Mammary epithelial cell (primary cell): ENCODE measurements at regions of chrX and their contacts with region 1.

Region 1: GRCh38 chrX:135454816-135455215 is 33.1 kb downstream of the SMIM10L2A start:
- DNase-seq: no peak
- H3K4me3 ChIP-seq: no peak overlapping the region
- H3K27ac ChIP-seq: no peak overlapping the region
- H3K4me1 ChIP-seq: no peaks in the 10 kb centered on the region
- H3K27me3 ChIP-seq: no peaks in the 10 kb centered on the region
- CTCF ChIP-seq: no peak

Region 2: GRCh38 chrX:135373357-135373756 is 81.5 kb before region 1 on chrX:
- CTCF ChIA-PET with region 1: no interaction called
- dilution Hi-C with region 1: no loop called
- in situ Hi-C with region 1: no loop called
- intact Hi-C with region 1: no loop called
- DNase-seq: no peak
- H3K4me3 ChIP-seq: no peak overlapping the region
- H3K27ac ChIP-seq: no peak overlapping the region
- H3K4me1 ChIP-seq: no peaks in the 10 kb centered on the region
- H3K27me3 ChIP-seq: no peaks in the 10 kb centered on the region
- CTCF ChIP-seq: no peak

Region 3: GRCh38 chrX:135396109-135396508 is 58.7 kb before region 1 on chrX:
- CTCF ChIA-PET with region 1: interaction called, 14 read pairs
- dilution Hi-C with region 1: no loop called
- in situ Hi-C with region 1: no loop called
- intact Hi-C with region 1: no loop called
- DNase-seq: peak; percentile 40
- H3K4me3 ChIP-seq: no peak overlapping the region
- H3K27ac ChIP-seq: no peak overlapping the region
- H3K4me1 ChIP-seq: peaks cover 3% of the 10 kb centered on the region
- H3K27me3 ChIP-seq: no peaks in the 10 kb centered on the region
- CTCF ChIP-seq: no peak